ENCODE measurements at regions of chr11 and their contacts with region 1.

Region 1: DNA sequence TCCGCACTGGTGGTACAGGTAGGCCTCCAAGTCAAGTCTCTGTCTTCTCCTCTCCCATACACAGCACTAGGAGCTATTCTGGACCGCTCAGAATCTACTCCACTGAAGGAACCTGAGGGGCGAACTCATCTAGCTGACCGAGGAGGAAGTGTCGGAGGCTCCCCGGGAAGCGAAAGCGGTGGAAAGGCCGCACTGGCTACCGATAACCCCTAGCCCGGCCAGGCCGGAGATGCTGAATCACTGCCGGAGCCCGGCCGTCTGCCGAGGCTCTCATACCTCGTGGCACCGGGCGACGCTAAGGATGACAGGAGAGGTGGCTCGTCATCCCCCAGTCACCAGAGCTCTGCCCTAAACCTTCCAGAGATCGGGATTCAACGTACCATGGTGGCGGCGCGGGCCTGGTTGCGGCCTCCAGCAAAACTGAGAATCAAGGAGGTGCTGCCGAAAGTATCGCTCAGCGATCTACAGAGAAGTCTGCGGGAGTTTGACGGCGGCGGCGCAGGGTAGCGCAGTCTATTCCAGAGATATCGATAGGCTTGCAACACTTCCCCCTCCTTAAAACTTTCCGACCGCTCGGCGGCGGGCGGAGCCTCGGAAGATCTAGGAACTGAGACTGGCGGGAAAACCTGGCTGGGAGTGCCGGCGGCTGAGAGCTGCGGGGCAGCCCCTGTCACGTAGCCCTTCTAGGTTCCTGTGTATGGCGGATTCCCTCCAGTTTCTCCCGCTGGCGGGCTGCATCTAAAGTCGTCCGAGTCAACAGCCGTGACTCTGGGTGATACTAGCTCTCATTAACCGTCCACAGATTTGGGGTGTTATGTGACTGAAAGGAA is at the start of gene PSMA1:
- DNase-seq: peak; percentile 91 to 97
- ATAC-seq: peak; percentile 95 to 97
- H3K4me3 ChIP-seq: peak within 1 kb of the TSS; percentile 64
- H3K27ac ChIP-seq: peak within 1 kb of the TSS; percentile 85 to 96
- H3K4me1 ChIP-seq: peaks cover 10% of the 10 kb centered on the region
- CTCF ChIP-seq: no peak
- EP300 ChIP-seq: no peak
- POLR2A ChIP-seq: peak; percentile 48
- RAD21 ChIP-seq: peak; percentile 7 to 23; a peak in 1 of 5 replicates
- polyA plus RNA-seq, gene PSMA1: 317 and 370 TPM in 2 replicates

Region 2: DNA sequence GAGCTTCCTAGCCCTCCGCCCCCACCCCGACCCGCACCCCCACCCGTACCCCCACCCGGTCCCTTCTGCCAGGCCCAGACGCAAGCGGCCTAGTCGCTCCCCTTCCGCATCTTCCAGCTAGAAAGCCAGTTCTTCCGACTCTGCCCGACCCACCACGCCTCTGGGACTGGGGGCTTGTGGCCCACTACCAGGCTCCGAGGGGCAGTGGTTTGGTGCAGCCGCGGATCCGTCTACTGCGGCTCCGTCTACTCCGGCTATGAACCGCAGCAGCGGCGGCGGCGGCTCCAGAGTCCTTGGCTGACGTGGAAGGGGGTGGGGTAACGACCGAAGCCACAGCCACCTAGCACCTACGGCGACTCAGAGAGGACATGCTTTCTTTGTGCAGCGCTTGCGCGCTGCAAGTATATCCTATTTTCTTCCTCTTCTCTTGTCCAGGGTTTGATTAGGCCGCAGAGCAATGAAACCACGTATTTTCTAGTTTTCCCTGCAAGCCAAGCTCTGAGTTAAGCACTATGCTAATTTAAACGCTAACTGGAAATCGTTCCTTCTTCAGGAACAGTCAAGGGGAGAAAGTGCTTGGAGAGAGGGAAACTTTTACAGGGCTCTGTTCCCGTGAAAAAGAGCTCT is 20.5 kb before region 1 on chr11 and contains the start of gene COPB1:
- CTCF ChIA-PET with region 1: no interaction called
- POLR2A ChIA-PET with region 1: interaction called, 12 read pairs
- DNase-seq: peak; percentile 76 to 96
- ATAC-seq: peak; percentile 96 to 97
- H3K4me3 ChIP-seq: peak within 1 kb of the TSS; percentile 78
- H3K27ac ChIP-seq: peak within 1 kb of the TSS; percentile 82 to 93
- H3K4me1 ChIP-seq: peaks cover 20% of the 10 kb centered on the region; the same call in 2 of the 3 replicates
- CTCF ChIP-seq: no peak
- EP300 ChIP-seq: no peak
- POLR2A ChIP-seq: peak; percentile 89
- RAD21 ChIP-seq: no peak
- polyA plus RNA-seq, gene COPB1: 231 and 232 TPM in 2 replicates

Region 3: DNA sequence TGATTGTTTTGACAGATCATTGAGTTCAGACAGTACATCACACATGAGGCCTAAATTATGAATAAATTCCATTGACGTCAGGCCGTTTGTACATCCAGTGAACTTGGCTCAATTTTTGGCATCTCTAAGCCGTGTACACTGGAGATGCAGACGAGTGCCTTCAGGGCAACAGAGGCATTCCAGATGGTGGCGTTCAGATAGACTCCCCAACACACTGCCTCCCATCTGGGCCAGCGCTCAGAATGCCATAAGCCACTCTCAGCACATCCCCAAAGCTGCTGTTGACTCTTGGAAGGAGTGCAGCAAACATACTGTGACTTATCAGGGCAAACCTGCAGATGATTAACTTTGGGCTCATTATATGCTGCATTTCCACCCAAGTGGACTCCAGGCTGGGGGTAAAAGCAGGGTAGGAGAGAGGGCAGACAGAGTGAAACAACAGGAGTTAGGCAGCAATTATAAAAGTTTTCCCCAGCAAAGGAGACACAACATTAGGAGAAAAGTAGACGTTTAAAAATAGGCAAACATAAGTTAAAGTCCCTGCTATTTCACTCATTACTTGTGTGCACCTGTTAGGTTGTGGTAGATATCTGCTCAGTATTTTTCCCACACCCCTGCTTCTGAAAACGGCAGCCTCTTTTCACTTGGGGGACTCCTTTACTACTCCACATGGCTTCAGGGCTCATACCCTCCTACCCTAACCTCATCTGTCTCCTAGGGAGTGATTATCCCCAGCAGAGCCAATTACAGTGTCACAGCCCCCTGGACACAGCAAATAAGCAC is 63.3 kb after region 1 on chr11:
- CTCF ChIA-PET with region 1: no interaction called
- POLR2A ChIA-PET with region 1: no interaction called
- DNase-seq: no peak
- ATAC-seq: no peak
- H3K4me3 ChIP-seq: no peak overlapping the region
- H3K27ac ChIP-seq: no peak overlapping the region
- H3K4me1 ChIP-seq: no peaks in the 10 kb centered on the region
- CTCF ChIP-seq: no peak
- EP300 ChIP-seq: no peak
- POLR2A ChIP-seq: no peak
- RAD21 ChIP-seq: no peak

Measured in A549 (cell line).